Gastrocnemius medialis (tissue), 4 donors: ENCODE measurements at regions of chr2 and their contacts with region 1.

Region 1: DNA sequence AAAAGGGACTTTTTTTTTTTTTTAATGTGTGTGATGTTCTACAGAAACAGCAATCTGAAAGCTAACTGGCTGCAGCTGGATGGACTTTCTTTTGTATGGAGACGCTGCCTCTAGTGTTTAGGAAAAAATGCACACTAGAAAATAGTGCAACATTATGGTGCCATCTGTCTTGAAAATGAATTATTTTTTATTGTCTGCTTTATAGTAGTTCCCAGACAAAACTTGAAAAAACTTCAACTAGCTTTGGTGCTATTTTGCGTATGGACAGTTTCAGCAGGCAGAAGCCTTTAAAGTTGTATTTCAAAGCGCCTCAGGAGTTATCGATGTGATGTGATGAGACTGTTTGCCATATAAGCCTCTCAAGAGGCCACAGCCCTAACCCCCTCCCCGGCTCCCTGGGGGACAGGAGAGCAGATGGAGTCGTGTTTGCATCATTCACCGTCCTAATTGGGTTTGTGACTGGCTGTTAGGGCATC is 86.9 kb downstream of the LTBP1 start:
- DNase-seq: no peak
- ATAC-seq: peak; percentile 53 to 86
- H3K4me3 ChIP-seq: peak overlapping the region; percentile 20 to 47 (median 35)
- H3K27ac ChIP-seq: no peak overlapping the region
- H3K4me1 ChIP-seq: peaks cover 2 to 4% of the 10 kb centered on the region in 2 donors
- H3K27me3 ChIP-seq: no peaks in the 10 kb centered on the region
- CTCF ChIP-seq: peak; percentile 36 to 59 (median 44)
- POLR2A ChIP-seq: no peak

Region 2: DNA sequence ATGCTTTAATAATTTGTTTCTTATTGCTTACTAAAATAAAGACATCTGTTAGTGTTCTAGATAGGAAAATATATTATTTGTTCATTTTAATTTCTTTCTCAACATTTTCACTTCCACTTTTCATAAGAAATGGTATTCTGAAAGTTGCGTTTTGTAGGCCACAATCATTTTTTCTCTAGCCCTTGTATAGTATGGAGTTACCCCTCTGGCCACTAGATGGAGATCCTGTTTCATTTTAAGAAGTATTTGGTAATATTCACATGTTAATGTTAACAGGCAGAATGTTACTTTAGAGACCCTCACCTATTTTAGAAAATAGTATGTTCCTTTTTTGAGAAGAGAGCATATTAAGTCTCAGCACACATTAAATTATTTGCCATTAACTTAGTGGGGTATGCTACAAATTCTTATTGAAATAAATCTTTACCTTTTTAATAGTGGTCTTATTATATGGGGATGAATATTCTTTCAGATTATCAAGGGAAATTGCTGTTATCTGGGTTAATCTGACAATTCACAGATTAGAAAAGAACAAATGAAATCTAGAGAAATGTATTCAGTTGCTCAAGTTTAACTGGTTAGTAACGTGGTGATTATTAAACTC is 479.7 kb before region 1 on chr2:
- in situ Hi-C with region 1: no loop called
- intact Hi-C with region 1: loop called (anchors 10 kb)
- DNase-seq: no peak
- ATAC-seq: peak in 1 of 2 donors; percentile 58
- H3K4me3 ChIP-seq: no peak overlapping the region
- H3K27ac ChIP-seq: no peak overlapping the region
- H3K4me1 ChIP-seq: no peaks in the 10 kb centered on the region
- H3K27me3 ChIP-seq: no peaks in the 10 kb centered on the region
- CTCF ChIP-seq: peak in 4 of 5 experiments; percentile 38 to 60 (median 48)
- POLR2A ChIP-seq: no peak

Region 3: DNA sequence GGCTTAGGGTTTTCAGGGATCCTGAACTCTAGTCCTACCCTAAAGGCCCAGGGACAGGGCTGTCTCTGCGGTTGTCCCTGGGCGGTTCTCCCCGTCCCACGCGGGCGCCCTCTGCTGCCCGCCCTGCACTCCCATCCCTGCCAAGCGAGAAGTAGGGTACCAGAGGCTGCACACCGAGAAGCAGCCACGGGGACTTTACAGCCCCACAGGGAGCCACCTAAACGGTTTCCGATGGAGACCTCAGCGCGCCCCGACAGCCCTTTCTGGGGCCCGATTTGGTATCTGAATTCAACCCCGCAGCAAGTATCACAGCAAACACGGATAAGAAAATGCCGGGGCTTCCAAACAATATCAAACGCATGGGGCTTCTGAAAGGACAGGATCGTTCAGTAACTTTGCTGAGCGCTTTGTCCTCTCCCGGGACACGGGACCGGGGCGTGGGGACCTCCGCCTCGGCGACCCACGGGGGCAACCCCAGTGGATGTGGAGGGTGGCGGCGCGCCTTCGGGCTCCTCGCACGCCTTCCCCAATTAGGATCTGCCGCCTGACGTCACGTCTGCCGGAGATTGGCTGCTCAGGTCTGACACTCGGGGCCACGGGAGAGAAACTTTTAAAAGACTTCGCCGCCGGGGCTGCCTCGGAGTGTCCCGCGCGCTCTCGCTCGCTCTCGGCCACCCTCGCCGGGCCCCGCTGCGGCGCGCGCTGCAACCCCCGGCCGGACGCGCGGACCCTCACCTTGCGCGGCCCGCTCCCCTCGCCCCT is 87.1 kb before region 1 on chr2 and contains the start of gene LTBP1:
- in situ Hi-C with region 1: loop called in 2 of 4 experiments (anchors 5 to 10 kb)
- intact Hi-C with region 1: loop called (anchors 1 kb)
- DNase-seq: peak; percentile 54 to 61
- ATAC-seq: peak; percentile 82 to 84
- H3K4me3 ChIP-seq: peak within 1 kb of the TSS; percentile 71 to 83 (median 74)
- H3K27ac ChIP-seq: peak within 1 kb of the TSS; percentile 75 to 79 (median 78)
- H3K4me1 ChIP-seq: no peaks in the 10 kb centered on the region
- H3K27me3 ChIP-seq: no peaks in the 10 kb centered on the region
- CTCF ChIP-seq: peak; percentile 48 to 85 (median 65)
- POLR2A ChIP-seq: peak; percentile 62 to 74
- total RNA-seq, gene LTBP1: 8.0 to 42.8 (median 18.4) TPM

Region 4: GRCh38 chr2:33086400-33087015 is 52.9 kb after region 1 on chr2:
- in situ Hi-C with region 1: loop called in 1 of 4 experiments (anchors 10 kb)
- intact Hi-C with region 1: no loop called
- DNase-seq: peak in 1 of 2 donors; percentile 17
- ATAC-seq: peak; percentile 47 to 81
- H3K4me3 ChIP-seq: peak overlapping the region in 2 of 4 donors; percentile 7 to 9
- H3K27ac ChIP-seq: peak overlapping the region in 3 of 4 donors; percentile 8 to 54 (median 34)
- H3K4me1 ChIP-seq: peaks cover 25 to 32% of the 10 kb centered on the region in 2 donors
- H3K27me3 ChIP-seq: no peaks in the 10 kb centered on the region
- CTCF ChIP-seq: peak in 2 of 5 experiments; percentile 12 to 30
- POLR2A ChIP-seq: no peak

Region 5: GRCh38 chr2:33275689-33276444 is 242.2 kb after region 1 on chr2:
- in situ Hi-C with region 1: no loop called
- intact Hi-C with region 1: loop called (anchors 2 kb)
- DNase-seq: peak; percentile 52 to 53
- ATAC-seq: peak; percentile 58 to 60
- H3K4me3 ChIP-seq: no peak overlapping the region
- H3K27ac ChIP-seq: peak overlapping the region; percentile 63 to 76 (median 70)
- H3K4me1 ChIP-seq: peaks cover 0 to 15% of the 10 kb centered on the region in 2 donors
- H3K27me3 ChIP-seq: no peaks in the 10 kb centered on the region
- CTCF ChIP-seq: no peak
- POLR2A ChIP-seq: peak; percentile 11 to 24

Region 6: GRCh38 chr2:33380001-33380609 is 346.5 kb after region 1 on chr2:
- in situ Hi-C with region 1: loop called in 3 of 4 experiments (anchors 10 kb)
- intact Hi-C with region 1: loop called (anchors 5 kb)
- DNase-seq: no peak
- ATAC-seq: no peak
- H3K4me3 ChIP-seq: no peak overlapping the region
- H3K27ac ChIP-seq: no peak overlapping the region
- H3K4me1 ChIP-seq: no peaks in the 10 kb centered on the region
- H3K27me3 ChIP-seq: no peaks in the 10 kb centered on the region
- CTCF ChIP-seq: peak; percentile 38 to 63 (median 43)
- POLR2A ChIP-seq: no peak

Region 7: DNA sequence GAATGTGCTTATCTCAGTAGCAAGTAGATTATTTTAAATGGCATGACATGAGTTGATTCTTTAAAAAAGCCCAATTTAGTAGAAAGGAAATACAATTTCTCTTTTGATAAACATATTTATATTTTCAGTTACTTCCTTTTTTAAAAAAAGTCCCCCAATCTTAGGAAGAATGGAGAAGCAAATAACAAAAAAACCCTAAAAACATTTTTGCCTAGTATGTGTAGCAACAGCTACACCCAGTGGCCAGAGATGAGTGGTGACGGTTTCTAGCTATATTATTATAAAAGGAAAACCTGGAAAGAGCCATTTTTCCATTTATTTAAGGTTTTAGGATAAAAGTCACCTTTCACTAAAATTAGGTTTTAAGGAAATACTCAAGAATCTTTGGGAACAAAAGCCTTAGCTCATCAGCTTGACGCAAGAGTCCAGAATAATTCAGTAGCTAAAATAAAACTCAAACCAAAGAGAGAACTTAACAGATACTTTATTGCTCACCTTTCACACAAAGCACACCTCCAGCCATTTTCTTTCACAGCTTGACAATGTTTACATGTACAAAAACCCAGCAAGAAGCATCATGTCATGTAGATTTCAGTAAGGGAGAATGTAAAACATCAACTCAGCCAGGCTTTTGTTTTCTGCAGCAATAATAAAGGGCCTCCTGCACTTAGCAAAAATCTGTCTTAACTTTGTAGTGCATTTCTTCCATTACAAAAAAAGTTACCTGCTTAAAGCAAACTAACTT is 549.7 kb after region 1 on chr2:
- in situ Hi-C with region 1: loop called in 3 of 4 experiments (anchors 25 kb)
- intact Hi-C with region 1: loop called (anchors 2 kb)
- DNase-seq: no peak
- ATAC-seq: no peak
- H3K4me3 ChIP-seq: no peak overlapping the region
- H3K27ac ChIP-seq: no peak overlapping the region
- H3K4me1 ChIP-seq: peaks cover 12 to 15% of the 10 kb centered on the region in 2 donors
- H3K27me3 ChIP-seq: no peaks in the 10 kb centered on the region
- CTCF ChIP-seq: peak; percentile 69 to 91 (median 83)
- POLR2A ChIP-seq: no peak